ENCODE measurements at regions of chr4 and their contacts with region 1.

Region 1: DNA sequence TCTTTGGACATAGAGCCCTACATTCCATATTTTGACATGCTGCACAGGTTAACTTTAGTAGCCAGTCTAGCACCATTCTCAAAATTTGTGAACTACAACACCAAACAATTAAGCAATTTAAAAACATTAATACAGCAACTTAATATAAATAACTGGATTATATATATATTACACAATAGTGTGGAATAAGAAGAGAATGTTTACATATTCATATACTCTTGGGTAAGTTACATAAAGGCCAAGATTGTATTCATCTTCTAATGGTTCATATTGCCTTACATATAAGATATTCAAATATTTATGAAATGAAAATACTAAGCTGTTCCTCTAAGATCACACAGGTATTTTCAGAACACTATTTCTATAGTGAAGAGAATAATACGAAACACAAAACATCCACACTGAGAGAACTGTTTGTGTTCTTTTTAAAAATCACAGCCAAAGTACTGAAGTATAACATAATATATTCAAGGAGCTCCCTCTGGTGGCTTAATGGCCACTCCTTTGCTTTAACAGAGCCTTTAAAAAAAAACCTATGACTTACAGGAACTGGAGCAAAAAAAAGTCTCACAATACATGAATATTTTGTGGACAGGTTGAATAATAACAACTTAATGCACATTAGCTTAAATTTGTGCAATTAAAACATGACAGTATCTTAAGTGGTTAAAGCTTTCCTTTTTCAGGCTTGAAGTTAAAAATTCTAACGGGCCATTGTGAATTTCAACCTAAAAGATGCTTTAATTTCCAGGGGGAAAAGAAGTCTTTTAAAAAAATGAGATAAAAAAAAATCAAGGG is 46.2 kb downstream of the NEK1 start:
- DNase-seq: peak; percentile 18
- H3K4me3 ChIP-seq: no peak overlapping the region
- H3K27ac ChIP-seq: no peak overlapping the region
- H3K27me3 ChIP-seq: no peaks in the 10 kb centered on the region
- CTCF ChIP-seq: peak; percentile 75

Region 2: GRCh38 chr4:169010125-169011023 is 555.8 kb before region 1 on chr4 and contains the start of gene CBR4:
- CTCF ChIA-PET with region 1: interaction called, 11 read pairs
- POLR2A ChIA-PET with region 1: no interaction called
- DNase-seq: peak; percentile 96
- H3K4me3 ChIP-seq: peak within 1 kb of the TSS; percentile 83
- H3K27ac ChIP-seq: peak within 1 kb of the TSS; percentile 92
- H3K27me3 ChIP-seq: no peaks in the 10 kb centered on the region
- CTCF ChIP-seq: peak; percentile 43
- polyA plus RNA-seq, gene CBR4: 4.2 and 4.5 TPM in 2 replicates

Region 3: DNA sequence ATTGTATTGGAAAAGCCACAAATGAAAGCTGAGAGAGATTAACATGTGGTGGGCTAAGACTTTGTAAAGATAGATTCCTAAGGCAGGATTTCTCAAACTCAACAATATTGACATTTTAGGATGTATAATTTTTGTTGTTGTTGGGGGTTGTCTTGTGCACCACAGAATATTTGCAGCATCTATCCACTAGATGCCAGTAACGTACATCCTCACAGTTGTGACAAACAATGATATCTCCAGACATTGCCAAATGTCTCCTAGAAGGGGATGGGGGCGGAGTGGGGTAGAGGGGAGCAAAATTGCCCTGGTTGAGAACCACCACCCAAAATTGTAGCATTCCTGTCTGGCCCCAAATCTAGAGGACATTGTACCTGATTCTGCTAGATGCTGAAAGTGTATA is 541.5 kb before region 1 on chr4:
- CTCF ChIA-PET with region 1: interaction called, 15 read pairs
- POLR2A ChIA-PET with region 1: no interaction called
- DNase-seq: peak; percentile 11
- H3K4me3 ChIP-seq: no peak overlapping the region
- H3K27ac ChIP-seq: no peak overlapping the region
- H3K27me3 ChIP-seq: no peaks in the 10 kb centered on the region
- CTCF ChIP-seq: peak; percentile 68

Region 4: GRCh38 chr4:169341490-169341889 is 224.7 kb before region 1 on chr4:
- CTCF ChIA-PET with region 1: no interaction called
- POLR2A ChIA-PET with region 1: no interaction called
- DNase-seq: peak; percentile 81
- H3K4me3 ChIP-seq: no peak overlapping the region
- H3K27ac ChIP-seq: peak overlapping the region; percentile 73
- H3K27me3 ChIP-seq: no peaks in the 10 kb centered on the region
- CTCF ChIP-seq: no peak

Region 5: GRCh38 chr4:169582205-169582604 is 16.0 kb after region 1 on chr4:
- CTCF ChIA-PET with region 1: interaction called, 27 read pairs
- POLR2A ChIA-PET with region 1: no interaction called
- DNase-seq: no peak
- H3K4me3 ChIP-seq: no peak overlapping the region
- H3K27ac ChIP-seq: no peak overlapping the region
- H3K27me3 ChIP-seq: no peaks in the 10 kb centered on the region
- CTCF ChIP-seq: no peak

Measured in AG04450 (cell line).